CD8-positive, alpha-beta T cell (primary cell): ENCODE measurements at regions of chr16 and their contacts with region 1.

Region 1: GRCh38 chr16:53737552-53737951 is 33.6 kb downstream of the FTO start:
- DNase-seq: no peak
- ATAC-seq: no peak
- H3K4me3 ChIP-seq: no peak overlapping the region
- H3K4me3 Mint-ChIP-seq: no peak overlapping the region
- H3K27ac ChIP-seq: no peak overlapping the region
- H3K27ac Mint-ChIP-seq: no peak overlapping the region
- H3K4me1 ChIP-seq: no peaks in the 10 kb centered on the region
- H3K4me1 Mint-ChIP-seq: peaks cover 35% of the 10 kb centered on the region
- H3K27me3 ChIP-seq: no peaks in the 10 kb centered on the region
- H3K27me3 Mint-ChIP-seq: no peaks in the 10 kb centered on the region
- CTCF ChIP-seq: no peak

Region 2: GRCh38 chr16:53014287-53014686 is 723.3 kb before region 1 on chr16:
- CTCF ChIA-PET with region 1: no interaction called
- POLR2A ChIA-PET with region 1: no interaction called
- intact Hi-C with region 1: loop called in 1 of 2 experiments (anchors 5 kb)
- DNase-seq: no peak
- ATAC-seq: no peak
- H3K4me3 ChIP-seq: no peak overlapping the region
- H3K4me3 Mint-ChIP-seq: no peak overlapping the region
- H3K27ac ChIP-seq: no peak overlapping the region
- H3K27ac Mint-ChIP-seq: no peak overlapping the region
- H3K4me1 ChIP-seq: no peaks in the 10 kb centered on the region
- H3K4me1 Mint-ChIP-seq: no peaks in the 10 kb centered on the region
- H3K27me3 ChIP-seq: no peaks in the 10 kb centered on the region
- H3K27me3 Mint-ChIP-seq: peaks cover 25% of the 10 kb centered on the region
- CTCF ChIP-seq: no peak

Region 3: DNA sequence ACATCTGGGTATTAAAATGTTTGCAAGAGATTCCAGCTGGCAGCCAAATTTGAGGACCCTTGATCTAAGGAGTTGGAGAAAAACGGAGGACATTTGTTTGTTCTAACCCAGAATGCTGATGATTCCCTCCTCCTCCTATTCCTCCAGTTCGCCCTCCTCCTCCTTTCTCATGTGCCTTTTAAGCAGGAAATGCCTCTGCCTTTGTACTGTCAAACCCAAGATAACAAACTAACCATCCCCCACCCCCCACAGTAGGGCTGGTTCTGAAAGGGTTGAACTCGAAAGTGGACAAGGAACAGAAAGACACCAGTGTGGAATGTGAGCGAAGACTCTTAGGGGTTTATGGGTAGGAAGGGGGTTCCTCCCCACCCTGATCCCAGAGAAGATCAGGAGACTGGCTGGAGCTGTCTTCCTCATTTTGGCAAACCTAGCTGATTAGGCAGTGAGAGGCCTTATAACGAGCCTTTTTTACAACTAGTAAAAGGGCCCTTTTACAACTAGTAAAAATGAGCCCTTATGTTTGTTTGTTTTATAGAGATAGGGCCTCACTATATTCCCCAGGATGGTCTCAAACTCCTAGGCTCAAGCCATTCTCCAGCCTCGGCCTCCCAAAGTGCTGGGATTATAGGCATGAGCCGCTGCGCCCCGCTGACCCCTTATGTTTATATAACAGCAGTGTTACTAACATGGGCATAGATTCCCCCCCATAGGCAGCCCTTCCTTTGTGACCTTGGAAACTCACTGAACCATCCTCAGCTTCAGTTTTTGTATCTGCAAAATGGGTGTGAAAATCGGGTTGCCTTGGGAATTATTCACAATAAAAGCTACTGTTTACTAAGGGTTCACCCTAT is 681.8 kb before region 1 on chr16:
- CTCF ChIA-PET with region 1: no interaction called
- POLR2A ChIA-PET with region 1: no interaction called
- intact Hi-C with region 1: no loop called
- DNase-seq: peak in 2 of 9 experiments; percentile 12 to 27
- ATAC-seq: no peak
- H3K4me3 ChIP-seq: peak overlapping the region; percentile 78 to 86
- H3K4me3 Mint-ChIP-seq: peak overlapping the region; percentile 87
- H3K27ac ChIP-seq: peak overlapping the region in 1 of 2 experiments; percentile 61
- H3K27ac Mint-ChIP-seq: peak overlapping the region; percentile 77
- H3K4me1 ChIP-seq: peaks cover 18% of the 10 kb centered on the region
- H3K4me1 Mint-ChIP-seq: peaks cover 30% of the 10 kb centered on the region
- H3K27me3 ChIP-seq: no peaks in the 10 kb centered on the region
- H3K27me3 Mint-ChIP-seq: no peaks in the 10 kb centered on the region
- CTCF ChIP-seq: no peak

Region 4: DNA sequence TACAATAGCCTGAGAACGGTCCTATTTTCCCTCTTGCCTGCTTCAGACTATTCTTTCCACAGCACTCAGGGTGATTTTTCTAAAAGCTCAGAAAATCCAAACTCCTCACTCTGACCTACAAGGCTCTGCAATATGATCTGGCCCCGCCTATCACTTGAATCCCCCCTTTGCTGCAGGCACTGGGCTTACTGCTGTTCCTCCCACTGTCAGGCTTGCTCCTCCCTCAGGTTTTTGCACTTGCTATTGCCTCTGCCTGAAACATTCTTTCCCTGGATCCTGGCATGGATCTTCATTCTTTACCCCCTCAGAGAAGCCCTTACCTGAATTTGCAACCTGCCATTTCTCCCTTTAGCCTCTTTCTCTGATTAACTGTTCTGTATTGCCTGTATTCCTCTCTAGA is 86.2 kb before region 1 on chr16:
- CTCF ChIA-PET with region 1: no interaction called
- POLR2A ChIA-PET with region 1: no interaction called
- intact Hi-C with region 1: no loop called
- DNase-seq: no peak
- ATAC-seq: no peak
- H3K4me3 ChIP-seq: no peak overlapping the region
- H3K4me3 Mint-ChIP-seq: no peak overlapping the region
- H3K27ac ChIP-seq: no peak overlapping the region
- H3K27ac Mint-ChIP-seq: no peak overlapping the region
- H3K4me1 ChIP-seq: no peaks in the 10 kb centered on the region
- H3K4me1 Mint-ChIP-seq: no peaks in the 10 kb centered on the region
- H3K27me3 ChIP-seq: no peaks in the 10 kb centered on the region
- H3K27me3 Mint-ChIP-seq: no peaks in the 10 kb centered on the region
- CTCF ChIP-seq: no peak